ENCODE measurements at regions of chr1 and their contacts with region 1.

Region 1: DNA sequence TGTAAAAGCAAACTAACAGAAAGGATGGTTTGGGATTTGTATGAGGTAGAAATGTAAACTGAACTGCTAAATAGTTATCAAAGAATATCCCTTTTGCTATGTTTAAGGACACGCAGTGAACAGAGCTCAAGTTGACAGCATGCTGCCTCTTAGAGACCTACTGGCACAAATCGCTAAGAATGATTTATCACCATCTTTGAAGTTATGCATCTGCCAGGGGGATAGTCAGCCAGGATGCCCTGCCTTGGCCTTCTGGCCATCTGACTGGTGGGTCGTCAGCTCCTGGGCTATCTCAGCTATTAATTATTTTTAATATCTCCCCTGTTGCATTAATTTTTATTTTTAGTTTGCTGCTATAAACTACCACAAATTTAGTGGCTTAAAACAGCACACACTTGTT is 334.8 kb upstream of the KAZN start:
- DNase-seq: no peak

Region 2: GRCh38 chr1:14498839-14499238 is 235.2 kb after region 1 on chr1:
- intact Hi-C with region 1: no loop called
- DNase-seq: no peak

Region 3: DNA sequence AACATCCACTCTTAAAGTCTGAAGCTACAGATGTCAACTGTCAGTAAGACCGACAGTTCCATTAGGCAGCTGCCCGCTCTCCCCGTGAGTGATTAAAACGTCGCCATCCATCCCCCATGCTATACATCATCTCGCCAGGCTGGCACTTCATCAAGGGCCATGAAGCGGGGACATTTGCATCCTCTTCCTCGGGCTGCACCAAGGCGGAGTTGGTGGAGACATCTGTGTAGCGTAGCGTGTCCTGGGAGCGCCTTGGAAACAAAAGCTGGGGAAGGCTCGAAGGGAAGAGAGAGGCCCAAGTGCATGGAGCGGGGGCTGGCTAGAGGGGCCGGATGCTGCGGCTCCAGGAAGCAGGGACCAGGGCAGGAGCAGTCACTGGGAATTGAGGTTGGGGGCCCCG is 585.0 kb after region 1 on chr1:
- intact Hi-C with region 1: loop called in 1 of 2 experiments (anchors 2 kb)
- DNase-seq: no peak

Measured in posterior vena cava (tissue), 2 donors.